Activated CD4-positive, alpha-beta memory T cell treated with anti-CD3 and anti-CD28 coated beads, Interleukin-2, amount 10 ng/mL, durations not matched to agents 7 days and 5 days (primary cell): ENCODE measurements at regions of chr11 and their contacts with region 1.

Region 1: GRCh38 chr11:2975594-2975993 is 16.5 kb downstream of the NAP1L4 start:
- DNase-seq: peak; percentile 53
- H3K4me3 Mint-ChIP-seq: no peak overlapping the region
- H3K27ac Mint-ChIP-seq: peak overlapping the region; percentile 38
- H3K4me1 Mint-ChIP-seq: peaks cover 37% of the 10 kb centered on the region
- H3K27me3 Mint-ChIP-seq: no peaks in the 10 kb centered on the region

Region 2: DNA sequence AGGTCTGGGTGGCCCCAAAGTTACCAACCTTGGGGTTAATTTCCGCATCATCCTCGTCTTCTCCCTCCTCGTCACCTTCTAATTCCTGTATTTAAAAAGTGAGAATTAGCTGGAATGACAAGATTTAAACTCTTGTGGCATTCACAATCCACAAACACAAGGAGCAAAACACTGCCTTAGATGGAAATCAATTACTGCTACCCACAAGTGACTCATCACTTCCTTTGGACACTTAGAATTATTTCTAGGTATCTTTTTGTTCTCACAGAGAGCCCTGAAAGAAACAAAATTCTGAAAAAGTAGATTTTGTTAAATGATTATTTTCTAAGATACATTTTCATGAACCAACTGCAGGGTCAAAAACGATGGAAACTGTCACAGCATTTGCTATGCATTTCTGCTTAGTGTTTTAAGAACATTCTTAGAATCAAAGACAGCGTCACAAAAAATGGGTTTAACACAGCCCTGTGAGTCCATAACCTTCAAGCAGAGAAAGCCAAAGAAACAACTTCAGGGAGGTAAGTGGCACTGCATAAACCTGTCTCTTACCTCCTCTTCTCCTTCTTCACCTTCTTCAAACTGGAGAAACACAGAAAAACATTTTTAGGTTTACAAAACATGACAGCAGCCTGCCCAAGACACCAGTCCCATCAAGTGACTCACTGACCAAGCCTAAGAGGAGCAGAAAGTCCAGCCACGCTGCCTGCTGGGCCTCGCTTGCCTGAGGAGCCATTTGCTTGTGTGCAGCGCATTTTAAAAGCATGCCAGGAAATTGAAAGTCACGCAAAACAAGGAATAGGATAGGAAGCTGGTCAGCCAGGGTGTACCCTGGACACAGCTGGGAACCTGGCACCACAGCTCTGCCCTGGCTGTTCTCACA is 24.1 kb before region 1 on chr11:
- CTCF ChIA-PET with region 1: interaction called, 14 read pairs
- POLR2A ChIA-PET with region 1: interaction called, 4 read pairs
- DNase-seq: no peak
- H3K4me3 Mint-ChIP-seq: no peak overlapping the region
- H3K27ac Mint-ChIP-seq: peak overlapping the region; percentile 72
- H3K4me1 Mint-ChIP-seq: peaks cover 70% of the 10 kb centered on the region
- H3K27me3 Mint-ChIP-seq: no peaks in the 10 kb centered on the region

Region 3: DNA sequence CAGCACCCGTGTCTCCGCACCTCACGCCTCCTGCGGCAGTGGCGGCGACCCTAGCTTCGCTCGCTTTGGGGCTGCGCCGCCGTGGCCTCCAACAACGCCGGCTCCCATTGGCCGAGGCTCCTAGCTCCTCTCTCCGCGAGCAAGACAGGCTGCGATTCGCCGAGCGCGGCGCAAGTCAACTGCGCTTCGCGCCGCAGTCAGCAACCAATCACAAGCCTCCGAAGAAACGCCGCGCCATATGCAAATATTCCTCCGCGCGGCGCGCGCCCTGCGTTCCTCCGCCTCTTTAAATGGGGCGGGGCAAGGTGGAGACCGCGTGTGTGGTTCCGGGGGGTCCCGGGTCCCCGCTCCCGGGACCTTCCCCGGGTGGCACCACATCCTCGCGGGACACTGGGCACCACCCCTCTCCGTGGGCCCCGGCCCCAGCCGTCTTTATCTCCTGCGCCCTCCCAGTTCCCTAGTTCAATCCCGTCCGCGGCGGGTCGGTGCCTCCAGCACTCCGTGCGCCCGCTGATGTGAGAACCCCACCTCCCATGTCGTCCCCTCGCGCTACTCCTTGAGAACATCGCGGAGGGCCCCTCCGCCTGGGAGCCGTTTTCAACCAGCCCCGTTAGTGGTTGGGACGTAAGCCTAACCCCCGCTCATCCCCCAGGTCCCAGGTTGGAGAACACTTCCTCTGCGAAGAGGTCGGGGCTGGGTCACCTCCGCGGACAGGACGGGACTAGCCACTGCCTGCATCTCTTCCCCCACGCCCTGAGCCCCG is 16.8 kb after region 1 on chr11 and contains the start of gene NAP1L4:
- CTCF ChIA-PET with region 1: interaction called, 23 read pairs
- POLR2A ChIA-PET with region 1: interaction called, 36 read pairs
- DNase-seq: peak; percentile 97
- H3K4me3 Mint-ChIP-seq: peak within 1 kb of the TSS; percentile 99
- H3K27ac Mint-ChIP-seq: peak within 1 kb of the TSS; percentile 97
- H3K4me1 Mint-ChIP-seq: peaks cover 25% of the 10 kb centered on the region
- H3K27me3 Mint-ChIP-seq: no peaks in the 10 kb centered on the region
- total RNA-seq, gene NAP1L4: 299 to 314 TPM

Region 4: GRCh38 chr11:3021125-3021524 is 45.5 kb after region 1 on chr11:
- CTCF ChIA-PET with region 1: interaction called, 50 read pairs
- POLR2A ChIA-PET with region 1: interaction called, 6 read pairs
- DNase-seq: peak; percentile 44
- H3K4me3 Mint-ChIP-seq: no peak overlapping the region
- H3K27ac Mint-ChIP-seq: no peak overlapping the region
- H3K4me1 Mint-ChIP-seq: peaks cover 41% of the 10 kb centered on the region
- H3K27me3 Mint-ChIP-seq: no peaks in the 10 kb centered on the region

Region 5: GRCh38 chr11:3091791-3092602 is 116.4 kb after region 1 on chr11:
- CTCF ChIA-PET with region 1: interaction called, 33 read pairs
- POLR2A ChIA-PET with region 1: no interaction called
- DNase-seq: peak; percentile 82
- H3K4me3 Mint-ChIP-seq: no peak overlapping the region
- H3K27ac Mint-ChIP-seq: no peak overlapping the region
- H3K4me1 Mint-ChIP-seq: peaks cover 4% of the 10 kb centered on the region
- H3K27me3 Mint-ChIP-seq: peaks cover 9% of the 10 kb centered on the region